Caco-2 (cell line): ENCODE measurements at regions of chr20 and their contacts with region 1.

Region 1: GRCh38 chr20:19915111-19915798 is 101.9 kb upstream of the NAA20 start:
- DNase-seq: no peak
- H3K4me3 ChIP-seq: no peak overlapping the region
- H3K4me3 Mint-ChIP-seq: no peak overlapping the region
- H3K27ac Mint-ChIP-seq: peak overlapping the region; percentile 77
- H3K4me1 ChIP-seq: peaks cover 40% of the 10 kb centered on the region
- H3K4me1 Mint-ChIP-seq: peaks cover 51% of the 10 kb centered on the region
- H3K27me3 ChIP-seq: no peaks in the 10 kb centered on the region
- H3K27me3 Mint-ChIP-seq: no peaks in the 10 kb centered on the region
- CTCF ChIP-seq: no peak

Region 2: GRCh38 chr20:19880256-19881079 is 34.8 kb before region 1 on chr20:
- CTCF ChIA-PET with region 1: no interaction called
- POLR2A ChIA-PET with region 1: interaction called, 3 read pairs
- intact Hi-C with region 1: loop called (anchors 5 kb)
- DNase-seq: peak; percentile 62 to 69
- H3K4me3 ChIP-seq: no peak overlapping the region
- H3K4me3 Mint-ChIP-seq: peak overlapping the region; percentile 62
- H3K27ac Mint-ChIP-seq: peak overlapping the region; percentile 96
- H3K4me1 ChIP-seq: peaks cover 72% of the 10 kb centered on the region
- H3K4me1 Mint-ChIP-seq: peaks cover 64% of the 10 kb centered on the region
- H3K27me3 ChIP-seq: no peaks in the 10 kb centered on the region
- H3K27me3 Mint-ChIP-seq: no peaks in the 10 kb centered on the region
- CTCF ChIP-seq: no peak

Region 3: GRCh38 chr20:19893356-19893755 is 21.9 kb before region 1 on chr20:
- CTCF ChIA-PET with region 1: no interaction called
- POLR2A ChIA-PET with region 1: no interaction called
- intact Hi-C with region 1: no loop called
- DNase-seq: no peak
- H3K4me3 ChIP-seq: no peak overlapping the region
- H3K4me3 Mint-ChIP-seq: no peak overlapping the region
- H3K27ac Mint-ChIP-seq: no peak overlapping the region
- H3K4me1 ChIP-seq: peaks cover 37% of the 10 kb centered on the region
- H3K4me1 Mint-ChIP-seq: peaks cover 30% of the 10 kb centered on the region
- H3K27me3 ChIP-seq: no peaks in the 10 kb centered on the region
- H3K27me3 Mint-ChIP-seq: no peaks in the 10 kb centered on the region
- CTCF ChIP-seq: no peak

Region 4: GRCh38 chr20:19947611-19948264 is 32.5 kb after region 1 on chr20:
- CTCF ChIA-PET with region 1: no interaction called
- POLR2A ChIA-PET with region 1: no interaction called
- intact Hi-C with region 1: loop called (anchors 1 kb)
- DNase-seq: peak in 1 of 2 experiments; percentile 49
- H3K4me3 ChIP-seq: no peak overlapping the region
- H3K4me3 Mint-ChIP-seq: no peak overlapping the region
- H3K27ac Mint-ChIP-seq: no peak overlapping the region
- H3K4me1 ChIP-seq: peaks cover 17% of the 10 kb centered on the region
- H3K4me1 Mint-ChIP-seq: peaks cover 12% of the 10 kb centered on the region
- H3K27me3 ChIP-seq: no peaks in the 10 kb centered on the region
- H3K27me3 Mint-ChIP-seq: no peaks in the 10 kb centered on the region
- CTCF ChIP-seq: no peak